Activated naive CD4-positive, alpha-beta T cell treated with anti-CD3 and anti-CD28 coated beads for 36 hours (primary cell): ENCODE measurements at regions of chr9 and their contacts with region 1.

Region 1: DNA sequence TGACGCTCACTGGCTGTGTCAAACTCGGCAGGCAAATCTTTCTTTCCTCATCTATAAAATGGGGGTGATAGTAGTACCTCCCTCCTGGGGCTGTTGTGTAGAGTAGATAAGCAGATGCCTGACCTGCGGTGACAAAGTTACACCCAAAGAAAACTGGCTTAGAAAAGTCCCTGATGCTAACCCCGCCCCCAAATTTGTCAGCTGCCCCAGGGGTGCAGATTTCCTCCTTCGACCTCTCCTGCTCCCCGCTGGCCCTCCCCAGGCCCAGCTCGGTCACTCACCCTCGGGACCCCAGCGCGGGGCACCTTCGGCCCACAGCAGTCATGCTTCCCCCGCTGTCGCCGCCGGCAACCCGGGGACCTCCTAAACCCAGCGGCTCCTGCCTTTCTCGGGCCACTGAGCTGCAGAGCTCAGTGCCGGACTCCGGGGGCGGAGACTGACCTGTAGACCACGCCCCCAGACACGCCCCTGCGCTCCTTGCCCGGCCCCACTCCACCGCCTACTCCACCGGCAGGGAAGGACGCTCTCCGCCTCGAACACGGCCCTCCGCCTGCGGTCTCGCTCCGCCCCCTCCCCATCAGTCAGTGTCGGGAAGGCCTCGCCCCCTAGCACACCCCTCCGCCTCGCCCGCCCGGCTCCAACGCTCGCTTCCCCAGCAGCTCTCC is 7.4 kb downstream of the SH2D3C start:
- DNase-seq: peak; percentile 99
- H3K4me3 Mint-ChIP-seq: peak overlapping the region; percentile 90
- H3K27ac Mint-ChIP-seq: peak overlapping the region; percentile 91
- H3K4me1 Mint-ChIP-seq: peaks cover 62% of the 10 kb centered on the region
- H3K27me3 Mint-ChIP-seq: no peaks in the 10 kb centered on the region

Region 2: DNA sequence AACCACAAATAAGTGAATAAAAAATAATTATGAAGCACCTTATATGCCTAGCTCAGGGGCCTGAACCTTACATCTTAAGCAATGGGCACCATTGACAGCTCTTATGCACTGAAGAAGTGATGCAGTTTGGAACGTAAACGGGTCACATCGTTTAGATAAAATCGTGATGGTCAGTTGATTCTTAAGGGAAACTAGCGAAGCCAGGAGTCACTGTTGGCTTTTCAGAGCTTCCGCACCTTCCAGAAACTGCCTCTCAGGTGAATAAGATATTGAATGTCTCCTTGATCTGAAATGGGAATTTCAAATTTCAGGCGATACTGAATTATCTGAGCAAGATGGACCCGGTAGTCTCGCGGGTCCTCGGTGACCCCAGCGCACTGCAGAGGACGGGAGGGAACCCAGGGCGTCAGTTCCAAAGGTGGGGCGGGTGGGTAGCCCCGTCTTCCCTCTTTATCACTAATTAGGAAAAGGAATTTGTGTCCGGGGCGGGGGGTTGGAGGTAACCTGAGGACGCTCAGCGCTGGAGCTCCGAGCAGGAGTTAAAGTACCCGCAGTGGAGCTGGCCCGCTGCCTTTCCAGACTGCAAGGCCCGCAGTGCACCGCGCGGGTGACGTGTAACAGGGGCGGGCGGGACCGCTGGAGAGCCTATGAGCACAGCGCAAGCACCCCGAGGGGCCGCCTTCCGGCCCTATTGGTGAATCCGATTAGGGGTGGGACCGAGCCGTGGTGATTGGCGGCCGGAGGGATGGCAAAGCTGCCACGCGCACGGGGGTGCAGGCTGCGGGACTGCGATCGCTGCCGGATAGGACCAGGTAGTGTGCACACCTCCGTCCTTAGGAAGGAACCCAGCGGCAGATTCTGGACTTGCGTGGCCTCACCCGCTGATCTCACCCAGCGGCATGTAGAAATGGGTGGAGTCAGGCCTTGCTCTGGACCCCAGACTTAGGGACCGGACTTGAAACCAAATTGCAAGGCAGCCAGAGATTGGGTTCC is 526.1 kb before region 1 on chr9:
- CTCF ChIA-PET with region 1: no interaction called
- intact Hi-C with region 1: loop called (anchors 10 kb)
- DNase-seq: peak; percentile 98
- H3K4me3 Mint-ChIP-seq: peak overlapping the region; percentile 83
- H3K27ac Mint-ChIP-seq: no peak overlapping the region
- H3K4me1 Mint-ChIP-seq: peaks cover 5% of the 10 kb centered on the region
- H3K27me3 Mint-ChIP-seq: no peaks in the 10 kb centered on the region

Region 3: GRCh38 chr9:127785023-127785932 is 14.2 kb after region 1 on chr9:
- CTCF ChIA-PET with region 1: interaction called, 18 read pairs
- intact Hi-C with region 1: loop called (anchors 1 kb)
- DNase-seq: peak; percentile 91
- H3K4me3 Mint-ChIP-seq: peak overlapping the region; percentile 95
- H3K27ac Mint-ChIP-seq: peak overlapping the region; percentile 91
- H3K4me1 Mint-ChIP-seq: peaks cover 68% of the 10 kb centered on the region
- H3K27me3 Mint-ChIP-seq: no peaks in the 10 kb centered on the region

Region 4: DNA sequence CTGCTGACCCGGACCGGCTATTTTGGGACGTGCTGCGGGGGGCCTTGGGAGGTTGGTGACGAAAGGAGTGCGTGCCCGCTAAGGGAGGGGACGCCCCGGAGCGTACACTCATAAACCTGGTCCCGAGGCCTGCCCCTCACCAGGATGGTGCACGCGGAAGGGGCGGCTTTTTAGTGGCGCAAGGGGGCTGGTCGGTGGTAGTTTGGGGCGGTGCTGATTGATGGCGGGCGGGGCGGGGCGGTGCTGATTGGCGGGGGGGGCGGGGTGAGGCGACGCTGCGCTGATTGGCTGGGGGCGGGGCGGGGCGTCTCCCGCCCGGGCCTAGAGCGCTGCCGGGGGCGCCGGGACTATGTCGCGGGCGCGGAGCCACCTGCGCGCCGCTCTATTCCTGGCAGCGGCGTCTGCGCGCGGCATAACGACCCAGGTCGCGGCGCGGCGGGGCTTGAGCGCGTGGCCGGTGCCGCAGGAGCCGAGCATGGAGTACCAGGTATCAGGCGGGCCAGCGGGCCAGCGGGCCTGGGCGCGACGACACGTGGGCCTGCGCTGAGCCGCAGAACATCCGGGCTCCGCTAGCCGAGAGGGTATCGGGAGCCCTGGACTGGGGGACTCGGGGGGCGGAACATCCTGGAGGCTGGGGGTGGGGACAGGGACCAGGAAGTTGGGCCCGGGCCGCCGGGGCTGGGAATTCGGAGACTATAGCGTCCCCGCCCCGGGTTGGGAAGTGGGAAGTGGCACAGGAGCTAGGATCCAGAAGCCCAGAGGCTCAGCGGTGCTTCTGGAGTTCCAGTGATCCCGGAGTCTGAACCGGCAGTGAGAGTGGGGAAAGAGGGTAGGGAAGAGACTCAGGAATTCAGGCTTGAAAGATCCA is 31.8 kb after region 1 on chr9 and contains the start of gene FPGS:
- CTCF ChIA-PET with region 1: interaction called, 3 read pairs
- intact Hi-C with region 1: loop called (anchors 1 kb)
- DNase-seq: peak; percentile 92
- H3K4me3 Mint-ChIP-seq: peak within 1 kb of the TSS; percentile 96
- H3K27ac Mint-ChIP-seq: peak within 1 kb of the TSS; percentile 84
- H3K4me1 Mint-ChIP-seq: peaks cover 29% of the 10 kb centered on the region
- H3K27me3 Mint-ChIP-seq: no peaks in the 10 kb centered on the region
- total RNA-seq, gene FPGS: 67.8 to 73.0 TPM

Region 5: GRCh38 chr9:128026773-128027541 is 255.9 kb after region 1 on chr9:
- CTCF ChIA-PET with region 1: no interaction called
- intact Hi-C with region 1: loop called (anchors 2 kb)
- DNase-seq: peak; percentile 80
- H3K4me3 Mint-ChIP-seq: peak overlapping the region; percentile 80
- H3K27ac Mint-ChIP-seq: peak overlapping the region; percentile 98
- H3K4me1 Mint-ChIP-seq: peaks cover 90% of the 10 kb centered on the region
- H3K27me3 Mint-ChIP-seq: no peaks in the 10 kb centered on the region